Activated T-helper 1 cell treated with anti-CD3 and anti-CD28 coated beads, Interleukin-12 subunit alpha, Interleukin-12 subunit beta, Interleukin-2, Interleukin-4 antibody, amounts not matched to agents 30 ng/mL and 10 ng/mL and 1 ng/mL, durations not matched to agents 14 hours and 24 hours and 36 hours (primary cell): ENCODE measurements at regions of chr19 and their contacts with region 1.

Region 1: DNA sequence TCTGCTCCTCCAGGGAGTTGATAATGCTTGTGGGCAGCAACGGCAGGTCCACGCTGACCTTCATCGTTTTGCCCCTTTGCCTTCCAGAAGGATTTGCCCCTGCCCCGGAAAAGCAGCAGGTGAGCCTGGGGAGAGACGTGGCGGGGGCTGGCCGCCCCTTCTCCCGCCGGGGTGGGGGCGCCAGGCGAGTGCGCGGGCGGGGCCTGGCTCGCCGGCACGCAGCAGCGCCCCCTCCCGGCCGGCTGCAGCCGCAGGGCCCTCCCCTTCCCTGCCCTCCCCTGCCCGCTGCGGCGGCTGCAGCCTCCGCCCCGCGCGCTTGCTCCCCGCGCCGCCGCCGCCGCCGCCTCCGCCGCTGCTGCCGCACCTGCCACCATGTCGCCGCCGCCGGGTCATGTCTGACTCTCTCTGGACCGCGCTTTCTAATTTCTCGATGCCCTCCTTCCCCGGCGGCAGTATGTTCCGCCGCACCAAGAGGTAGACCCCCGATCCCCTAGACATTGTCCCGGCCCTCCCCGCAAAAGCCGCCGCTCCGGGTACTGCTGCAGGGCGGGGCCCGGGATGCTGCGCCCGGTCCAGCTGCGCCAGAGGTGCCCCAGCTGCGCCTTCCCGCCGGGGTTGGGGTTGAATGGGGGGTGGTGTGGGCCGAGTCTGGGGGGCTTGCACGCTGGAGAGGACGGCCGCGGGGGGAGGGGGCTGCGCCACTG is at the start of gene MAST1:
- DNase-seq: peak; percentile 47
- H3K4me3 Mint-ChIP-seq: peak within 1 kb of the TSS; percentile 68
- H3K27ac Mint-ChIP-seq: no peak within 1 kb of the TSS
- H3K4me1 Mint-ChIP-seq: peaks cover 30% of the 10 kb centered on the region
- H3K27me3 Mint-ChIP-seq: peaks cover 59% of the 10 kb centered on the region
- total RNA-seq, gene MAST1: 1.4 and 1.7 TPM in 2 replicates

Region 2: DNA sequence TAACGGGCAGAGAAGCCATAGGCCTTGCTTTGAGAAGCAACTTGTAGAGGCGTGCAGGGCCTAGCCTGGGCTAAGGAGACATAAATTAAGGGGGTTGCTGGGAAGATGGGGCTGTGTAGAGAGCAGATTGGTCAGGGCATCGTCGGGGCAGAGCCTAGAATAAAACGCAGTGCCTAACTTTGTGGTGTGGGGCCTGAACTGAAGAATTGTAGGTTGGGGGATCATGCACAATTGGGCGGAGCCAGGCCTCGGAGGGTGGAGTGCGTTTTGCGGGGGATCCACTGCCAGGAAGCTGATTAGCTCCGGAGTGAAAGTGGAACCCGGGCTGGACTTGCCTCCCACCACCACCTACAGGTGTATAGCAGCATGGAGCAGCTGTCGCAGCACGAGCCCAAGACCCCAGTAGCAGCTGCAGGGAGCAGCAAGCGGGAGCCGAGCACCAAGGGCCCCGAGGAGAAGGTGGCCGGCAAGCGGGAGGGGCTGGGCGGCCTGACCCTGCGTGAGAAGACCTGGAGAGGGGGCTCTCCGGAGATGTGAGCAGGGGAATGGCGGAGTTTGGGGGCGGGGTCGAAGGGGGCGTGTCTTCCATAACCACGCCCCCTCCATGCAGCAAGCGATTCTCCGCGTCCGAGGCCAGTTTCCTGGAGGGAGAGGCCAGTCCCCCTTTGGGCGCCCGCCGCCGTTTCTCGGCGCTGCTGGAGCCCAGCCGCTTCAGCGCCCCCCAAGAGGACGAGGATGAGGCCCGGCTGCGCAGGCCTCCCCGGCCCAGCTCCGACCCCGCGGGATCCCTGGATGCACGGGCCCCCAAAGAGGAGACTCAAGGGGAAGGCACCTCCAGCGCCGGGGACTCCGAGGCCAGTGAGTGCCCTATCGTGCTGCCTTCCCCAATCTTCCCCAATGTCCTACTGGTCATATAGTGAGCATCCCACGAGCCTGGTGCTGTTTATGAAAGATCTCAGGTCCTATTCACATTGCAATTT is 29.1 kb after region 1 on chr19:
- intact Hi-C with region 1: loop called (anchors 2 kb)
- DNase-seq: peak; percentile 68
- H3K4me3 Mint-ChIP-seq: peak overlapping the region; percentile 76
- H3K27ac Mint-ChIP-seq: peak overlapping the region; percentile 40
- H3K4me1 Mint-ChIP-seq: no peaks in the 10 kb centered on the region
- H3K27me3 Mint-ChIP-seq: peaks cover 3% of the 10 kb centered on the region

Region 3: GRCh38 chr19:13012690-13013608 is 174.6 kb after region 1 on chr19:
- intact Hi-C with region 1: loop called (anchors 5 kb)
- DNase-seq: no peak
- H3K4me3 Mint-ChIP-seq: peak overlapping the region; percentile 79
- H3K27ac Mint-ChIP-seq: peak overlapping the region; percentile 85
- H3K4me1 Mint-ChIP-seq: peaks cover 23% of the 10 kb centered on the region
- H3K27me3 Mint-ChIP-seq: peaks cover 72% of the 10 kb centered on the region

Region 4: GRCh38 chr19:13082192-13083007 is 244.1 kb after region 1 on chr19:
- intact Hi-C with region 1: no loop called
- DNase-seq: no peak
- H3K4me3 Mint-ChIP-seq: no peak overlapping the region
- H3K27ac Mint-ChIP-seq: no peak overlapping the region
- H3K4me1 Mint-ChIP-seq: no peaks in the 10 kb centered on the region
- H3K27me3 Mint-ChIP-seq: peaks cover 8% of the 10 kb centered on the region

Region 5: GRCh38 chr19:13207846-13208671 is 369.7 kb after region 1 on chr19:
- intact Hi-C with region 1: no loop called
- DNase-seq: peak; percentile 45
- H3K4me3 Mint-ChIP-seq: peak overlapping the region; percentile 77
- H3K27ac Mint-ChIP-seq: peak overlapping the region; percentile 91
- H3K4me1 Mint-ChIP-seq: peaks cover 12% of the 10 kb centered on the region
- H3K27me3 Mint-ChIP-seq: peaks cover 4% of the 10 kb centered on the region